Common myeloid progenitor, CD34-positive (primary cell): ENCODE measurements at regions of chr5 and their contacts with region 1.

Region 1: GRCh38 chr5:140244525-140245025 is 58.3 kb downstream of the PFDN1 start:
- DNase-seq: peak; percentile 85 to 91 (median 91)
- H3K4me3 ChIP-seq: no peak overlapping the region
- H3K27ac ChIP-seq: no peak overlapping the region
- H3K4me1 ChIP-seq: peaks cover 5 to 20% (median 13%) of the 10 kb centered on the region in 4 experiments
- H3K27me3 ChIP-seq: no peaks in the 10 kb centered on the region

Region 2: GRCh38 chr5:140228364-140228837 is 16.2 kb before region 1 on chr5:
- CTCF ChIA-PET with region 1: interaction called, 20 read pairs
- POLR2A ChIA-PET with region 1: no interaction called
- DNase-seq: no peak
- H3K4me3 ChIP-seq: no peak overlapping the region
- H3K27ac ChIP-seq: no peak overlapping the region
- H3K4me1 ChIP-seq: no peaks in the 10 kb centered on the region
- H3K27me3 ChIP-seq: peaks cover 0 to 2% (median 0%) of the 10 kb centered on the region in 5 experiments

Region 3: DNA sequence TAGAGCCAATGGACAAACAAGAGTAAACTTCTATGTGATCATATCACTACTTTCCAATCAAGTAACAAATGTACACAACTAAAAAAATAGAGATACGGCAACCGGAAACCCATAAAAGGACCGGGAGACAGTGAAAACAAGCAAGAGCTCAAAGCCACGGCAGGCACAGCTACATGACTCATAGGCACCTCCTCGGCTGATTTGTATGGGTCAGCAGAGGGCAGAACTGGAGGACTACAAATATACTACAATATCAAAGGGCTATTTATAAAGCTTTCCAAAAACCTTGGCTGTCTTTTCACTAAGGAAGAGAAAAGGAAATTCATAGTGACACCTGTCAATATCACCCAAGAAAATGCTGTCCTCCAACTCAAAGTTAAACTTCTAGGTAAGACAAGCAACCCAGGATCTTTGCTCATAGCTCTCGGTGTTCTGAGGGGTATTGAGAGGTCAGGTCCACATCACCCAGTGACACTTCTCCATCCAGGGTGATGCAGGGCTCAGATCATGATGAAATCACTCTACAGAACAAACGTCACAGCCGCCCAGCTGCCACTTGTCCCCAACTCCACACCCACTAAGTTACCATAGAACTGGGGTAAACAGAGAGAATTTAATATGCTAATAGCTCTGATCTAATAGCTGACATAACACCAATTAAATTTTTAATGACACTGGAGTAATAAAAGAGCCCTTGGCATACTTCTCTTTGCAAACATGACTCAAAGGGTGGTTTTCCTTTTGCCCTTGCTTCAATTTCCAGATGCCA is 17.0 kb after region 1 on chr5:
- CTCF ChIA-PET with region 1: interaction called, 38 read pairs
- POLR2A ChIA-PET with region 1: no interaction called
- DNase-seq: peak in 2 of 3 donors; percentile 35 to 49
- H3K4me3 ChIP-seq: no peak overlapping the region
- H3K27ac ChIP-seq: no peak overlapping the region
- H3K4me1 ChIP-seq: peaks cover 0 to 3% (median 0%) of the 10 kb centered on the region in 4 experiments
- H3K27me3 ChIP-seq: no peaks in the 10 kb centered on the region

Region 4: GRCh38 chr5:140284013-140284412 is 39.4 kb after region 1 on chr5:
- CTCF ChIA-PET with region 1: interaction called, 17 read pairs
- POLR2A ChIA-PET with region 1: no interaction called
- DNase-seq: no peak
- H3K4me3 ChIP-seq: no peak overlapping the region
- H3K27ac ChIP-seq: no peak overlapping the region
- H3K4me1 ChIP-seq: peaks cover 0 to 7% (median 1%) of the 10 kb centered on the region in 4 experiments
- H3K27me3 ChIP-seq: no peaks in the 10 kb centered on the region

Region 5: DNA sequence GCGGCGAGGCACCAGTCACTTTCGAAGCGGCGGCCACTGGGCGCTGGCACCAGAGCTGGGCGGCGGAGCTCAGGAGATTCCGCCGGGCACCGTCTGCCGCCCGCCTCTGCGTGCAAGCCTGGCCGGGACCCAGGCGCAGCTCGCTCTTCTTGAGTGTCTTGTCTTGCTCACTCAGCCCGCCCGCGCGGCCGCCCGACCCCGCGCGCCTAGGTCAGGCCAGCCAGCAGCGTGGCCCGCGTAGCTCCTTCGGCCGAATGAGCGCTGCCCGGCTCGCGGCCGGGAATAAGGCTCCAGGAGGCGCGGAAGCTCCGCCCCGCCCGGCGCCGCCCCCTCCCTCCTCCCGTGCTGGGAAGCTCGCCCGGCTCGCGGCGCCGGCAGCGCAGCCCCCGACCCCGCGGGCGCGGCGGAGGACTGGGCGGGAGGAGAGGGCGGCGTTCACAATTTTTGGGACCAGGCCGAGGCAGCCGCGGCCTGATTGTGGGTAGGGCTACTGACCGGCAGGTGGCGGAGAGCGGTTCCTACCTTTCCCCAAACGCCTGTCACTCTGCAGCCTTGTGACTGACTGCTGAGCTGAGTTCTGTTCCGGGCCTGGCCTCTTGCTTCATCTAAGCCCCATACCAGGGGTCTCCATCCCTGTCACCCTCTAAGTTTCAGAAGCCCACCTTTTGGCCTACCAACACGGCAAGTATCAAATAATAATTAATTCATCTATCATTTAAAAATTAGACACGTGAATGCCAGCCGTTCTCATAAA is 102.0 kb after region 1 on chr5 and contains the start of gene HBEGF:
- CTCF ChIA-PET with region 1: interaction called, 552 read pairs
- POLR2A ChIA-PET with region 1: interaction called, 5 read pairs
- DNase-seq: peak; percentile 50 to 59 (median 52)
- H3K4me3 ChIP-seq: peak within 1 kb of the TSS; percentile 44 to 80 (median 66)
- H3K27ac ChIP-seq: no peak within 1 kb of the TSS
- H3K4me1 ChIP-seq: peaks cover 21 to 61% (median 36%) of the 10 kb centered on the region in 4 experiments
- H3K27me3 ChIP-seq: peaks cover 0 to 13% (median 6%) of the 10 kb centered on the region in 5 experiments

Region 6: GRCh38 chr5:140357726-140358093 is 113.1 kb after region 1 on chr5:
- CTCF ChIA-PET with region 1: interaction called, 552 read pairs
- POLR2A ChIA-PET with region 1: interaction called, 5 read pairs
- DNase-seq: peak; percentile 77 to 86 (median 83)
- H3K4me3 ChIP-seq: peak overlapping the region in 2 of 7 experiments; percentile 37 to 45
- H3K27ac ChIP-seq: no peak overlapping the region
- H3K4me1 ChIP-seq: peaks cover 0 to 6% (median 3%) of the 10 kb centered on the region in 4 experiments
- H3K27me3 ChIP-seq: peaks cover 0 to 3% (median 0%) of the 10 kb centered on the region in 5 experiments

Region 7: GRCh38 chr5:140362860-140363630 is 118.5 kb after region 1 on chr5:
- CTCF ChIA-PET with region 1: interaction called, 69 read pairs
- POLR2A ChIA-PET with region 1: interaction called, 5 read pairs
- DNase-seq: peak; percentile 69 to 83 (median 77)
- H3K4me3 ChIP-seq: peak overlapping the region in 5 of 7 experiments; percentile 13 to 62 (median 52)
- H3K27ac ChIP-seq: no peak overlapping the region
- H3K4me1 ChIP-seq: peaks cover 0 to 6% (median 4%) of the 10 kb centered on the region in 4 experiments
- H3K27me3 ChIP-seq: peaks cover 0 to 3% (median 0%) of the 10 kb centered on the region in 5 experiments